PC-9 (cell line): ENCODE measurements at regions of chr3 and their contacts with region 1.

Region 1: GRCh38 chr3:110576962-110577361 is 494.7 kb upstream of the NECTIN3 start:
- DNase-seq: peak; percentile 63 to 86
- H3K4me3 ChIP-seq: no peak overlapping the region
- H3K27ac ChIP-seq: peak overlapping the region; percentile 34; the same call in 1 of the 2 replicates
- H3K4me1 ChIP-seq: peaks cover 14% of the 10 kb centered on the region
- H3K27me3 ChIP-seq: no peaks in the 10 kb centered on the region
- CTCF ChIP-seq: no peak

Region 2: DNA sequence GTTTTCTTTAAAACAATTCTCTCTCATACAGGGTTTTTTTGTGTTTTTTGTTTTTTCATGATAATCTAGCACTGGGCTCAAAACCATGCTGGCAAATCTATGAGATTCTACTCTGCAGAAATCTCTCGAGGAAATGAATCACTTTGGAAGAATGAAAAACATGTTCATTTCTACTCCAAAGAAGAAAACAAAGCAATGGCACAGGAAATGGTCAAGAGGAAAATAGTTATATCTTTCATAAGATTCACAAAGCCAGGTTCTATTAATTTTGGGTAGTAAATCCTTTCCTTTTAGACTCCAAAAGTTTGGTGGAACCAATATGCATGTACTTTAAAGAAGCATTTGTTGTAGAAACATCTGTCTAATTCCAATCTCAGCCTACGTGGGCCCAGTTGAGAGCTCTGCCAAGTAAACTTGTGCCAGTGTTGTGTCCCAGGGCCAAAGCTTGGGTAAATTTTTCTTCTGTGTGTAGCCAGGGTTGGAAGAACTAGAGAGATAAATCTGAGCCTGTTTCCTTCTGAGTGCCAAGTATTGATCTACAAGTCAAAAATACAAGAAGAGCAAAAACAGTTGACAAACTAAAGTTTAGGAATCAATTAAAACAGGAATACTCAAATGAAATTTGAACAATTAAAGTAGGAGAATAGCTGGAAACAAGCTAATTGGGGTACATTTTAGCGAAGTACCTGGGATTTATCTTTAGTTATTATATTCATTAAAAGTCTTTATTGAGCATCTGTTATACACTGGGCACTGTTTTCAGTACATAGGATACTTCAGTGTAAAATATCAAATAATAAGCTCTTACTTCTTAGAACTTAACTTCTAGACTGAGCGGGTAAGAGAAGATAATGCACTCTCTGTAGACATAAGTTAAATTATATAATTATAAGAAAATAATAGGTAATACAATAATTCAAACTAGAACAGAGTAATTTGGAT is 162.9 kb before region 1 on chr3:
- CTCF ChIA-PET with region 1: no interaction called
- POLR2A ChIA-PET with region 1: no interaction called
- intact Hi-C with region 1: loop called (anchors 10 kb)
- DNase-seq: no peak
- H3K4me3 ChIP-seq: no peak overlapping the region
- H3K27ac ChIP-seq: no peak overlapping the region
- H3K4me1 ChIP-seq: no peaks in the 10 kb centered on the region
- H3K27me3 ChIP-seq: no peaks in the 10 kb centered on the region
- CTCF ChIP-seq: no peak

Region 3: GRCh38 chr3:110526777-110527727 is 49.9 kb before region 1 on chr3:
- CTCF ChIA-PET with region 1: no interaction called
- POLR2A ChIA-PET with region 1: interaction called, 4 read pairs
- intact Hi-C with region 1: loop called (anchors 1 kb)
- DNase-seq: peak; percentile 38 to 58
- H3K4me3 ChIP-seq: no peak overlapping the region
- H3K27ac ChIP-seq: no peak overlapping the region
- H3K4me1 ChIP-seq: 0 out of 2 replicates have a peak, but pooled peaks cover 6% of the 10 kb centered on the region
- H3K27me3 ChIP-seq: no peaks in the 10 kb centered on the region
- CTCF ChIP-seq: no peak

Region 4: GRCh38 chr3:110664148-110664547 is 87.2 kb after region 1 on chr3:
- CTCF ChIA-PET with region 1: no interaction called
- POLR2A ChIA-PET with region 1: no interaction called
- intact Hi-C with region 1: loop called (anchors 5 kb)
- DNase-seq: peak in 1 of 2 experiments; percentile 9
- H3K4me3 ChIP-seq: no peak overlapping the region
- H3K27ac ChIP-seq: no peak overlapping the region
- H3K4me1 ChIP-seq: no peaks in the 10 kb centered on the region
- H3K27me3 ChIP-seq: no peaks in the 10 kb centered on the region
- CTCF ChIP-seq: no peak